Activated CD8-positive, alpha-beta memory T cell treated with anti-CD3 and anti-CD28 coated beads, Interleukin-2, amount 10 ng/mL, durations not matched to agents 7 days and 5 days (primary cell): ENCODE measurements at regions of chr2 and their contacts with region 1.

Region 1: GRCh38 chr2:224646242-224646846 is 61.2 kb upstream of the CUL3 start:
- DNase-seq: no peak
- ATAC-seq: no peak
- H3K4me3 Mint-ChIP-seq: no peak overlapping the region
- H3K27ac Mint-ChIP-seq: no peak overlapping the region
- H3K4me1 Mint-ChIP-seq: no peaks in the 10 kb centered on the region
- H3K27me3 Mint-ChIP-seq: peaks cover 2% of the 10 kb centered on the region

Region 2: DNA sequence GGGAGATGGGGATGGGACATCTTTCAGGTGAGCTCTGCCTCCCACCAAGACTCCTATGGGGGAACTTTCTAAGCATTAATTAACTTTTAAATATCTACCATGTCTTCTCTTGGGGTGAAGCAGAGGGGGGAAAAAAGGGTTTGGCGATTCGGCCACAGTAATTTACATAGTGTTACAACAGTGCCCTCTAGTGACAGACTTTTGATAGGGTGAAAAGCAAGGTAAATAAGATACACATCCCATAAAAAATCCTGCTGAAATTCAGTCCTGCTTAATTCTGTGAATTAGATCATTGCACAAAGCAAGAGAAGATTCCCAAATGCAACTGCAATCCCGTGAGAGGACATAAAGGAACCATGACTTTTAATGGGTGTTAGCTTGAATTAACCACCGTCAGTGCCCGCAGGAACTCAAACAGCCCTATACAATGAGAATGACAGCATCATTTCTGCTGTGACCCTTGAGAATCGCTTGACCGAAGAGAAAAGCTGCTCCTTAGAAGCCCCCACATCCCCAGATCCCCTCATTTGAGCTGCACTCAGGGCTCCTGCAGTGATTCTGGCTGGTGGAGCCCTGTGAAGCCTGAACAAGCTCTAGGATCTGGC is 277.2 kb before region 1 on chr2:
- CTCF ChIA-PET with region 1: interaction called, 15 read pairs
- DNase-seq: no peak
- ATAC-seq: no peak
- H3K4me3 Mint-ChIP-seq: no peak overlapping the region
- H3K27ac Mint-ChIP-seq: no peak overlapping the region
- H3K4me1 Mint-ChIP-seq: no peaks in the 10 kb centered on the region
- H3K27me3 Mint-ChIP-seq: no peaks in the 10 kb centered on the region